A673 (cell line): ENCODE measurements at regions of chr11 and their contacts with region 1.

Region 1: DNA sequence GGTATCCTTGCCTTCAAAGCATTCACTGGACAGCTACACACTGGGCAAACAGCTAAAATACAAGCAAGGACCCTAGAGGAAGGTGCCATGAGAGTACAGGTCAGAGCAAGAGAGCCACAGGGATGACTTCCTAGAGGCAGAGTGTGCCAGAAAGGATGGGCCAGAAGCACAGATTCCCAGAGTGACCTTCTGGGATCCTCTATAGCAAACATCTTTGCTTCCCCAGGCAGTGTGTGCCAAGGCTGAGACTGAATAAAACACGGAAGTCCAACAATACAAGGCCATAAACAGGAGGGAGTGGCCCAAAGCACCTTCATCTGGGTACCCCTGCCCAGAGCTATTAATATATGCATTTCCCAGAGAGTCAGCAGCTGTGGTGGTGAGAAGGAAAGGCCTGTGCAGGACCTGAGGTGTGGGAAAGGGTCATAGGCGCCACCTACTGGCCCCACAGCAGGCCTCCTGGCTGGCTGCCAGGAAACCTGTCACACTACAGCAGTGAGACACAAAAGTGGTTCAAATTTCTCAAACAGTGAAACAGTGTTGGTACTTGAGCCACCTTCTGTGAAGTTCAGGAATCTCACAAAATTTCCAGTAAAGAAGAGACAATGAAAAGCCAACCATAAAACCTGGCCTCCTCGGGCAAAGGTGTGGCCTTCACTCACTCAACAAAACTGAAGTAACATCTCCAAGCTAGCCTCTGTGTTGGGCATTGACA is 20.3 kb downstream of the CLPB start:
- DNase-seq: peak; percentile 78
- H3K4me3 ChIP-seq: no peak overlapping the region
- H3K27ac ChIP-seq: no peak overlapping the region
- H3K4me1 ChIP-seq: no peaks in the 10 kb centered on the region
- H3K27me3 ChIP-seq: no peaks in the 10 kb centered on the region
- CTCF ChIP-seq: peak; percentile 82

Region 2: GRCh38 chr11:71120490-71120896 is 1293.6 kb before region 1 on chr11:
- CTCF ChIA-PET with region 1: no interaction called
- POLR2A ChIA-PET with region 1: no interaction called
- intact Hi-C with region 1: no loop called
- DNase-seq: peak; percentile 21
- H3K4me3 ChIP-seq: no peak overlapping the region
- H3K27ac ChIP-seq: no peak overlapping the region
- H3K4me1 ChIP-seq: no peaks in the 10 kb centered on the region
- H3K27me3 ChIP-seq: no peaks in the 10 kb centered on the region
- CTCF ChIP-seq: peak; percentile 24; the same call in 1 of the 2 replicates

Region 3: DNA sequence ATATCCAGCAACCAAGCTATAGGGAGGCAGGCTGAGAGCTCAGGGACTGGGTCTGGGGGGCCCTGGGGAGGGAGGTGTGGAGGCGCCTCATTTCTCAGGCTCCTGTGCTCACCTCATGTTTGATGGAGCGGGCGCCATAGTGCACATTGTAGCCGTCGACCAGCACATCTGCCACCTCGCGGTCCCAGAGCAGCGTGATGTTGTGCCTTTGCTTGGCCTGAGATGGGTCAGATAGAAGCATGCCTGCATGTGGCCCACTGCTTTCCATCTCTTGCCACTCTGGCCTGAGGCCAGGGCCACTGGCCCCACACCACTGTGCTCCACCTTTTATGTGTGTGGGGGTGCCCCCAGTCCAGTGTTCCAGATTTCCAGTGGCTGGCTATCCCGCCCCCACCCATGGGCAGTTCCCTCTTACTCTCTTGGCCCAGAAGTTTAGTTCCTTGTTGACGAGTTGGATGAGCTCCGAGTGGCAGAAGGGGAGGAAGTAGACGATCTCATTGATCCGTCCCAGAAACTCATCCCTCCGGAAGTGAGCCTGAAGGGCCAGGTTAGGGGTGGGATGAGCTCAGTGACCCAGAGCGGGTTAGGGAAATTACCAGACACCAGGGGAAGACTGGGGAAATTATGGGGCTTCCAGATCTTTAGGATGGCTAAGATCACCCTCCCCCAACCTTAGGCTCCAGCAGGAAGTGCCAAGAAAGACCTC is 120.0 kb before region 1 on chr11:
- CTCF ChIA-PET with region 1: no interaction called
- POLR2A ChIA-PET with region 1: no interaction called
- intact Hi-C with region 1: loop called (anchors 5 kb)
- DNase-seq: no peak
- H3K4me3 ChIP-seq: no peak overlapping the region
- H3K27ac ChIP-seq: no peak overlapping the region
- H3K4me1 ChIP-seq: no peaks in the 10 kb centered on the region
- H3K27me3 ChIP-seq: no peaks in the 10 kb centered on the region
- CTCF ChIP-seq: no peak

Region 4: DNA sequence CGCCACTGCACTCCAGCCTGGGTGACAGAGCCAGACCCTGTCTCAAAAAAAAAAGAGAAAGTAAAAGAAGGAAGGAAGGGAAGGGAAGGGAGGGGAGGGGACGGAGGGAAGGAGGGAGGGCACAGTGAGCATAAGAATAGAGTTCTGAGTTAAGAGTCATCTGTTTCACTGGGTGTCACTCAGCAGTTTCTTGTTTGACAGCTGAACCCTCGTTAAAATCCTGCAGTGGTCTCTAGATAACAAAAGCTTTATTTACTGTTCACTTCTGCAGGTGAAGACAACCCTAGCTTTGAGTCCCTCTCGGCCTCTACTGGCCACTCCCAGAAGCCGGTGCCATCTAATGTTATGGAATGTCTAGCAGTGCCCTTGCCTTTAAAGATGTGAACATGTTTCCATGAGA is 51.0 kb before region 1 on chr11:
- CTCF ChIA-PET with region 1: no interaction called
- POLR2A ChIA-PET with region 1: no interaction called
- intact Hi-C with region 1: no loop called
- DNase-seq: no peak
- H3K4me3 ChIP-seq: no peak overlapping the region
- H3K27ac ChIP-seq: no peak overlapping the region
- H3K4me1 ChIP-seq: no peaks in the 10 kb centered on the region
- H3K27me3 ChIP-seq: no peaks in the 10 kb centered on the region
- CTCF ChIP-seq: no peak

Region 5: DNA sequence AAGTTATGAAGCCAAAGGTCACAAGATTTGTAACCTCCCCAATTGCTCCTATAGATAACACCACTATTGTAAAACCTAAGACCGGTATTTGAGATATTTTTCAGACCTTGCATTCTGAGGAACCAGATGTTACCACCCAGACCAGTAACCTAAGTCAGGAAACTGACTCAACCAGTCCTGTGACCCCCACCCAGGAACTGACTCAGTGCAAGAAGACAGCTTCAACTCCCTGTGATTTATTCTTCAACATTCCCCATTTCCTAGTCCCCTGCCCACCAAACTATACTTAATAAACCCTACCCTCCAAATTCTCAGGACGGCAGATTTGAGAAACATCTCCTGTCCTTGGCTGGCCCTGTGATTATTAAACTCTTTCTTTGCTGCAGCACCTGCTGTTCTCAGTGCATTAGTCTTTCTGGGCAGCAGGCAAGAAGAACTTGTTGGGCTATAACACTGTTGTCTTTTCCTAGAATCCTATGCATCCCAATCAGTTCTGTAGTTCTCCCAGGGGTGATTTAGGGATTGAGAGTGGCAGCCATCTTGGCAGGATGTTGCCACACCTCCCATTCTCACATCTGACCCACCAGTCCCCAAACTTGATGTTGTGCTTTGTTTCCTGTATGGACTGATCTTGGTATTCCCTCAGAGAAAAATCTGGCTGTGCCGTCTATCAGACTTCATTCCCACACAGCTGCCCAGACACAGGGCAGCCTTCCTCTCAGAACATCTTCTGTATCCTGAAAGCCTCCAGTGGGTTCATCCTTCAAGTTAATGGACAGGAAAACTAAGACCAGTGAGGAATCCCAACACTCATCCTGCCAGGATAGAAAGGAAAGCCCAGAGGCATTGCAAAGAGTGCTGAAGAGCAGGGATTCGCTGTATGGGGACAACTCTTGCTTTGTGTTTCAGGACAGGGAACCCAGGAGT is 156.2 kb after region 1 on chr11:
- CTCF ChIA-PET with region 1: no interaction called
- POLR2A ChIA-PET with region 1: no interaction called
- intact Hi-C with region 1: no loop called
- DNase-seq: no peak
- H3K4me3 ChIP-seq: no peak overlapping the region
- H3K27ac ChIP-seq: no peak overlapping the region
- H3K4me1 ChIP-seq: no peaks in the 10 kb centered on the region
- H3K27me3 ChIP-seq: no peaks in the 10 kb centered on the region
- CTCF ChIP-seq: no peak